ENCODE measurements at regions of chr4 and their contacts with region 1.

Region 1: GRCh38 chr4:41692717-41693345 is 55.7 kb downstream of the PHOX2B start:
- DNase-seq: no peak
- ATAC-seq: peak; percentile 88
- H3K4me3 ChIP-seq: no peak overlapping the region
- H3K27ac ChIP-seq: no peak overlapping the region
- H3K4me1 ChIP-seq: no peaks in the 10 kb centered on the region
- H3K27me3 ChIP-seq: no peaks in the 10 kb centered on the region
- CTCF ChIP-seq: peak; percentile 88 to 94 (median 89)
- EP300 ChIP-seq: no peak
- POLR2A ChIP-seq: no peak
- RAD21 ChIP-seq: peak; percentile 94

Region 2: DNA sequence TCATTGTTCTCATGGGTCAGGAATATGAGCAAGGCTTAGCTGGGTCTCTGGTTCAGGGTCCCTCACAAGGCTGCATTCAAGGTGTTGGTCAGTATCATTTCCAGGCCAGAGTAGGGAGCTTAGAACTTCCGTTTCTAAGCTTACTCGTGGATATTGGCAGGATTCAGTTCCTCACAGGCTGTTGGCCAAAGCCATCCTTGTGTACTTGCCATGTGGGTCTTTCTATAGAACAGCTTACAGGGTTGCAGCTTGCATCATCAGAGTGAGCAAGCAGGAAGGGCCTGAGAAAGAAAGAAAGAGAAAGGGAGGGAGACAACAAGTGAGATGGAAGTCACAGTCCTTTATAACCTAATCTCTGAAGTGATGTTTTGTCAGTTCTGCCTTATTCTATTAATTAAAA is 159.9 kb before region 1 on chr4:
- CTCF ChIA-PET with region 1: no interaction called
- POLR2A ChIA-PET with region 1: no interaction called
- RAD21 ChIA-PET with region 1: no interaction called
- SMC1A ChIA-PET with region 1: no interaction called
- in situ Hi-C with region 1: no loop called
- intact Hi-C with region 1: no loop called
- DNase-seq: no peak
- ATAC-seq: no peak
- H3K4me3 ChIP-seq: no peak overlapping the region
- H3K27ac ChIP-seq: no peak overlapping the region
- H3K4me1 ChIP-seq: no peaks in the 10 kb centered on the region
- H3K27me3 ChIP-seq: no peaks in the 10 kb centered on the region; a peak in 1 of 4 replicates
- CTCF ChIP-seq: no peak
- EP300 ChIP-seq: no peak
- POLR2A ChIP-seq: no peak
- RAD21 ChIP-seq: no peak

Region 3: DNA sequence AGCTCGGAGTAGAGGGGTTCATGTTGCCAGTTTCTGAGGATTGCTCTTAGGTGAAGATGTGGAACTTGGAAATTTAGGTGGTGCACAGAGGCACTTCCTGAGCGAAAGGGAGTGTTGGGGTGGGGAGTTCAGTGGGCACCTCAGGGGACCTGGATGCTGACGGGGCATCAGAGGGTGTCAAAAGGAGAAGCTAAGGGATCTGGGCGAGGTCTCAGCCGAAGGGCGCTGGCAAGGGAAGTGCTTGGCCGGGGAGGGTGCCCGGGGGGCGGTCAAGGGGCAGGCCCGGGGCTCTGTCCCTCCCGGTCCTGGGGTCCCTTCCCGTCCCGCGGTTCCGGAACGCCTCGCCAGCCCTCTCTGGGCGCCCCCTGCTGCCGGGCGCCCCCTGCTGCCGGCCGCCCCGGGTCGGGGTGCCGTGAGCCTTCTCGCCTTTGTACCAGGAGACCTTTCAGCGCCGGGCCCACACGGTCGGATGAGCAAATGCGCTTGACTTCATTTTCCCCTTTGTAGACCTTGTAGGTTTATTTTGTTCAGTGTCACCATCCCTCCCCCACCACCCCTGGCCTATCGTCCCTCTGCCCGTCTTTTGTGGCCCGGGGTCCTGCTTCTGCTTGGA is 58.7 kb after region 1 on chr4:
- CTCF ChIA-PET with region 1: interaction called, 3 read pairs
- POLR2A ChIA-PET with region 1: no interaction called
- RAD21 ChIA-PET with region 1: no interaction called
- SMC1A ChIA-PET with region 1: no interaction called
- in situ Hi-C with region 1: no loop called
- intact Hi-C with region 1: loop called (anchors 2 kb)
- DNase-seq: no peak
- ATAC-seq: peak; percentile 48; the same call in 1 of the 3 replicates
- H3K4me3 ChIP-seq: no peak overlapping the region
- H3K27ac ChIP-seq: no peak overlapping the region
- H3K4me1 ChIP-seq: no peaks in the 10 kb centered on the region
- H3K27me3 ChIP-seq: peaks cover 8 to 16% of the 10 kb centered on the region in 2 experiments
- CTCF ChIP-seq: peak in 1 of 3 experiments; percentile 20; a peak in 1 of 6 replicates
- EP300 ChIP-seq: no peak
- POLR2A ChIP-seq: no peak
- RAD21 ChIP-seq: no peak

Region 4: DNA sequence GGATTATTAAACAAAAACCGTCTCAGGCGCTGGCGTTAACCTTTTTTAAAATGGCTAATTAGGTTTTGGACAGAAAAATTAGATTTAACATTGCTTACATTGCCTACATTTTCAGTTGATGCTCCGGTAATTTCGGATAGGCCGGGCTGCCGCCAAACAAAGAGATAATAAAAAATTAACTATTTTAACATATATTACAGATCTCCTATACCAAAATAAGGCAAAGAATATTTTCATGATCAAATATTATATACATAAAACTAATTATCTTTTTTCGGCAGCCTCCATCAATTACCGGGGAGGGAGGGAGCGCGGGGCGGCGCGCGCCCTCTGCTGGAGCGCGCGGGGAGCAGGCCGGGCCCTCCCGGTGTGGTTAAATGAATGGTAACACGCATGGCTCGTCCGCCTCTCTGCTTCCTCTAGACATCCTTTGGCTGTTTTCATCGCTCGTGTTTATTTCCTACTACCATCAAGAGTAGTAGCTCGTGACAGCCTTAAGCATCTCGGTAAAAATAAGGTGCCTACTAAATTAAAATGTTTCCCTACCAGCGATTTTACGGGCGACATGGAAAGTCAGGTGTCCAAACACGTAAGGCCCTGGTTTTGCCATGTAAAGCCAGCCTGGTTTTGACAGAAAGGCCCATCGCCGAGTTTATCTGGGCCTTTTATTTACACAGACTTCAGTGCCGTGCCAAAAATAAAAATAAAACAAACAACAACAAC is 190.0 kb after region 1 on chr4:
- CTCF ChIA-PET with region 1: interaction called, 85 read pairs
- POLR2A ChIA-PET with region 1: no interaction called
- RAD21 ChIA-PET with region 1: interaction called, 4 read pairs
- SMC1A ChIA-PET with region 1: interaction called, 22 read pairs
- in situ Hi-C with region 1: loop called (anchors 5 kb)
- intact Hi-C with region 1: loop called (anchors 1 kb)
- DNase-seq: no peak
- ATAC-seq: peak; percentile 99
- H3K4me3 ChIP-seq: no peak overlapping the region
- H3K27ac ChIP-seq: no peak overlapping the region
- H3K4me1 ChIP-seq: no peaks in the 10 kb centered on the region
- H3K27me3 ChIP-seq: peaks cover 19 to 22% of the 10 kb centered on the region in 2 experiments
- CTCF ChIP-seq: peak; percentile 81 to 91 (median 90)
- EP300 ChIP-seq: no peak
- POLR2A ChIP-seq: no peak
- RAD21 ChIP-seq: peak; percentile 78